ENCODE measurements at regions of chr4 and their contacts with region 1.

Region 1: DNA sequence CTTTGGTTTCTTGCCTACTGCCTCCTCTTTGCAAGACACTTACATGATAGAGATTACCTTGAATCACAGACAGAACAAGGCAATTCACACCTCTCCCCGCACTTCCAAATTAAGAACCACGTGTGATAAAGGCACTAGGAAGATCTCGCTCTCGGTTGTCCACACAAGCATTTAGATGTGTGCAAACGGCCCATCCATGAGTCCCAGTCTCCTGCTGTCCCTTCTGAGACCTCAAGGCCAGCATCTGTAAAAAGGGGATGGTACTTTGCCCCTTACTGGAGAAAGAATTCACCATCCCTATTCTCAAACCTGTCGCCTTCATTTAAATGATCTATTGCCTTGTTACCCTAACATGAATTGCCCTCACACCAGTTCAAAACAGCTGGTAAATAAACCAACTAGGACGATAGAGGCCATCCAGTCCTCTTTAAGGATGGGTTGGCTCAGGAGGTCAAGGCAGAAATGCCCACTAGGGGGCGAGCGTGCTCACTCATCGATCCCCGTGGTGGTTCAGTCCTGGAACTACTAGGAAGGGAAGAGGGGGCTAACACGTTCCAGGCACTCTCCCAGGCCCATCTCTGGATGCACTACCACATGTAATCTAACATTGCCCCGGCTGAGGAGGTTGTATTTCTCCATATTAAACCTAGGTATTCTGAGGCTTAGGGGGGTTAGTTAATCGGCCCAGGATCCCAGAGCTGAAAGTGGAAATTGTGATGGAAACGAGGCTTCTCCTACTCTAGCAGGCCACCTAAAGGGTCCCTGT is 95.8 kb downstream of the DHX15 start:
- DNase-seq: peak; percentile 66
- H3K4me3 ChIP-seq: no peak overlapping the region
- H3K27ac ChIP-seq: no peak overlapping the region
- H3K4me1 ChIP-seq: no peaks in the 10 kb centered on the region
- H3K27me3 ChIP-seq: no peaks in the 10 kb centered on the region
- CTCF ChIP-seq: peak; percentile 75 to 89 (median 78)
- POLR2A ChIP-seq: no peak

Region 2: GRCh38 chr4:24980064-24980690 is 491.6 kb after region 1 on chr4:
- intact Hi-C with region 1: loop called (anchors 10 kb)
- DNase-seq: peak; percentile 46
- H3K4me3 ChIP-seq: no peak overlapping the region
- H3K27ac ChIP-seq: peak overlapping the region in 1 of 2 donors; percentile 13
- H3K4me1 ChIP-seq: no peaks in the 10 kb centered on the region
- H3K27me3 ChIP-seq: no peaks in the 10 kb centered on the region
- CTCF ChIP-seq: peak; percentile 64 to 83 (median 76)
- POLR2A ChIP-seq: no peak

Region 3: GRCh38 chr4:25144870-25145481 is 656.4 kb after region 1 on chr4:
- intact Hi-C with region 1: loop called (anchors 10 kb)
- DNase-seq: no peak
- H3K4me3 ChIP-seq: no peak overlapping the region
- H3K27ac ChIP-seq: no peak overlapping the region
- H3K4me1 ChIP-seq: no peaks in the 10 kb centered on the region
- H3K27me3 ChIP-seq: no peaks in the 10 kb centered on the region
- CTCF ChIP-seq: peak; percentile 10 to 61 (median 44)
- POLR2A ChIP-seq: no peak

Measured in prostate gland (tissue), 2 donors.